GM12878 (cell line): ENCODE measurements at regions of chr7 and their contacts with region 1.

Region 1: DNA sequence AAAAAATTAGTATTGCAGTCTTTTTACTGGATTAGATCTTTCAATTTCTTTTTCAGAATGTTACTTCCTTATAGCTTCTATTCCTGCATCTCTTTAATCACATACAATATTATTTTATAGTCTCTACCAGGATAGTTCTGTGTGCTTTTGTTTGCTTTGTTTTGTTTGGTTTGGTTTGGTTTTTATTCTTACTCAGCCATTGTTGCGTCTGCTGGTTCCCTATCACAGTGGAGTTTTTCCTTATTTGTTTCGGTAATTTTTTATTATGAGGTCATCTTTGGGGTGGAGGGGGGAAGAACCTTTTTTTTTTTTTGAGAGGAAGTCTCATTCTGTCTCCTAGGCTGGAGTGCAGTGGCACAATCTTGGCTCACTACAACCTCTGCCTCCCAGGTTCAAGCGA is 9.0 kb upstream of the BAIAP2L1 start:
- DNase-seq: no peak
- ATAC-seq: no peak
- H3K4me3 ChIP-seq: no peak overlapping the region
- H3K27ac ChIP-seq: no peak overlapping the region
- H3K4me1 ChIP-seq: no peaks in the 10 kb centered on the region
- H3K27me3 ChIP-seq: peaks cover 0 to 3% of the 10 kb centered on the region in 2 experiments; a peak in 2 of 4 replicates
- CTCF ChIP-seq: no peak
- EP300 ChIP-seq: no peak
- POLR2A ChIP-seq: no peak
- RAD21 ChIP-seq: no peak

Region 2: DNA sequence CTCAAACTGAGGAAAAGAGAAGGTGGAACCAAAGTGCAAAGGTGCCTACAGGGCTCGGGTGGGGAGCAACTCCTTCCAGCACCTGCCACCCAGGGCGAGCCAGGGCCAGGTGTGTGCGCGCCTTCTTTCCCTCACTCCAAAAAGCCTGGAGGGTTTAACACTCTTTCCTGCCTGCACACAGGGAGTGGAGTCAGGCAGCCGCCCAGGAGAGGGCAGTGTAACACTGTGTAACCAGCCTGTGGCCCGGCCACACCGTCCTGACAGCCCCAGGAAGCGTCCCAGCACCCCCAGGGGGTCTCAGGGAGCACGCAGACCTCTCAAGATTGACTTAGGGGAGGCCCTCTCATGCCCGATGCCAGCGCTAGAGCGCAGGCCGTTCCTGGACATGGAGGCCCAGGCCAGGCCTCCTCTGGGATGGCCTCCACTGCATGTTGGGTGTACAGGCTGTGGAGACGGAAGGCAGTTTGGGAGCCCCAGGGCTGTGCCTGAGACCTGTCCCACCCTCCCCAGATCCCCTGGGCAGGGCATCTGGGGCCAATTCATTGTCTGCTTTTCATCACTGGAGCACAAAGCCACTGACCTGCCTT is 115.0 kb before region 1 on chr7:
- CTCF ChIA-PET with region 1: interaction called, 3 read pairs
- POLR2A ChIA-PET with region 1: no interaction called
- RAD21 ChIA-PET with region 1: no interaction called
- SMC1A ChIA-PET with region 1: no interaction called
- in situ Hi-C with region 1: loop called (anchors 5 kb)
- intact Hi-C with region 1: no loop called
- DNase-seq: no peak
- ATAC-seq: peak; percentile 92
- H3K4me3 ChIP-seq: no peak overlapping the region
- H3K27ac ChIP-seq: no peak overlapping the region
- H3K4me1 ChIP-seq: no peaks in the 10 kb centered on the region
- H3K27me3 ChIP-seq: no peaks in the 10 kb centered on the region
- CTCF ChIP-seq: peak; percentile 66 to 79 (median 70)
- EP300 ChIP-seq: no peak
- POLR2A ChIP-seq: no peak
- RAD21 ChIP-seq: peak; percentile 73

Region 3: GRCh38 chr7:98420966-98421612 is 11.2 kb after region 1 on chr7:
- CTCF ChIA-PET with region 1: interaction called, 12 read pairs
- POLR2A ChIA-PET with region 1: no interaction called
- RAD21 ChIA-PET with region 1: no interaction called
- SMC1A ChIA-PET with region 1: interaction called, 5 read pairs
- in situ Hi-C with region 1: no loop called
- intact Hi-C with region 1: no loop called
- DNase-seq: no peak
- ATAC-seq: peak; percentile 98
- H3K4me3 ChIP-seq: no peak overlapping the region
- H3K27ac ChIP-seq: no peak overlapping the region
- H3K4me1 ChIP-seq: peaks cover 6% of the 10 kb centered on the region; the same call in 1 of the 2 replicates
- H3K27me3 ChIP-seq: 0 out of 4 replicates have a peak, but pooled peaks cover 0 to 3% of the 10 kb centered on the region in 2 experiments
- CTCF ChIP-seq: peak; percentile 84 to 95 (median 93)
- EP300 ChIP-seq: no peak
- POLR2A ChIP-seq: no peak
- RAD21 ChIP-seq: peak; percentile 59

Region 4: GRCh38 chr7:98640375-98640774 is 230.5 kb after region 1 on chr7:
- CTCF ChIA-PET with region 1: no interaction called
- POLR2A ChIA-PET with region 1: no interaction called
- RAD21 ChIA-PET with region 1: no interaction called
- SMC1A ChIA-PET with region 1: no interaction called
- in situ Hi-C with region 1: no loop called
- intact Hi-C with region 1: no loop called
- DNase-seq: no peak
- ATAC-seq: no peak
- H3K4me3 ChIP-seq: no peak overlapping the region
- H3K27ac ChIP-seq: no peak overlapping the region
- H3K4me1 ChIP-seq: peaks cover 26% of the 10 kb centered on the region
- H3K27me3 ChIP-seq: no peaks in the 10 kb centered on the region
- CTCF ChIP-seq: no peak
- EP300 ChIP-seq: no peak
- POLR2A ChIP-seq: no peak
- RAD21 ChIP-seq: no peak